CD4-positive, alpha-beta memory T cell (primary cell): ENCODE measurements at regions of chr5 and their contacts with region 1.

Region 1: GRCh38 chr5:76325876-76326491 is 77.1 kb upstream of the IQGAP2 start:
- DNase-seq: peak; percentile 52 to 65 (median 57)
- H3K4me3 ChIP-seq: no peak overlapping the region
- H3K4me3 Mint-ChIP-seq: peak overlapping the region; percentile 66 to 84 (median 74)
- H3K27ac ChIP-seq: peak overlapping the region; percentile 49
- H3K27ac Mint-ChIP-seq: peak overlapping the region; percentile 91 to 97 (median 94)
- H3K4me1 ChIP-seq: peaks cover 66% of the 10 kb centered on the region
- H3K4me1 Mint-ChIP-seq: peaks cover 52 to 79% (median 67%) of the 10 kb centered on the region in 4 donors
- H3K27me3 ChIP-seq: no peaks in the 10 kb centered on the region
- H3K27me3 Mint-ChIP-seq: no peaks in the 10 kb centered on the region

Region 2: DNA sequence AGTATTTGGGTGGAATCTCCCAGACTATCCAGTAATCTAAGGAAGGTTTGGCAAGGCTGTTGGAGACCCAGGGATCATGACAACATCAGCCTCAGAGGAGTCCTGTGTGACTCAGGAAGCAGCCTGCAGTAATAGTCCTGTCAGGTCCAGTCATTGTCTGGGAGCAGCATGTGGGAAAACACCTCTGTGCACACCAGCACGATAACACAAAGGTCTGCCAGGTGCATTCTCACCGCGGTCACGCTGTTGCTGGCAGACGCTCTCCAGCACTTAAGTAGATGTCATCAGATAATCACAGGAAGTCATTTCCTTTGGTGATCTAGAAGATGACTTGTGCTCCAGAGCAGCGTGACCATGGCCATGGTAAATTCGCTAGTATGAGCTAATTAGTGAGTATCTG is 22.1 kb before region 1 on chr5:
- CTCF ChIA-PET with region 1: interaction called, 40 read pairs
- POLR2A ChIA-PET with region 1: interaction called, 25 read pairs
- intact Hi-C with region 1: no loop called
- DNase-seq: peak; percentile 16 to 75 (median 39)
- H3K4me3 ChIP-seq: peak overlapping the region in 1 of 2 donors; percentile 1
- H3K4me3 Mint-ChIP-seq: peak overlapping the region in 5 of 8 donors; percentile 0 to 83 (median 21)
- H3K27ac ChIP-seq: no peak overlapping the region
- H3K27ac Mint-ChIP-seq: peak overlapping the region; percentile 7 to 83 (median 75)
- H3K4me1 ChIP-seq: peaks cover 28% of the 10 kb centered on the region
- H3K4me1 Mint-ChIP-seq: peaks cover 26 to 46% (median 37%) of the 10 kb centered on the region in 4 donors
- H3K27me3 ChIP-seq: no peaks in the 10 kb centered on the region
- H3K27me3 Mint-ChIP-seq: no peaks in the 10 kb centered on the region

Region 3: GRCh38 chr5:76310208-76310607 is 15.8 kb before region 1 on chr5:
- CTCF ChIA-PET with region 1: interaction called, 40 read pairs
- POLR2A ChIA-PET with region 1: interaction called, 25 read pairs
- intact Hi-C with region 1: no loop called
- DNase-seq: no peak
- H3K4me3 ChIP-seq: no peak overlapping the region
- H3K4me3 Mint-ChIP-seq: no peak overlapping the region
- H3K27ac ChIP-seq: no peak overlapping the region
- H3K27ac Mint-ChIP-seq: peak overlapping the region in 1 of 7 donors; percentile 13
- H3K4me1 ChIP-seq: no peaks in the 10 kb centered on the region
- H3K4me1 Mint-ChIP-seq: peaks cover 5 to 14% (median 8%) of the 10 kb centered on the region in 4 donors
- H3K27me3 ChIP-seq: no peaks in the 10 kb centered on the region
- H3K27me3 Mint-ChIP-seq: no peaks in the 10 kb centered on the region

Region 4: DNA sequence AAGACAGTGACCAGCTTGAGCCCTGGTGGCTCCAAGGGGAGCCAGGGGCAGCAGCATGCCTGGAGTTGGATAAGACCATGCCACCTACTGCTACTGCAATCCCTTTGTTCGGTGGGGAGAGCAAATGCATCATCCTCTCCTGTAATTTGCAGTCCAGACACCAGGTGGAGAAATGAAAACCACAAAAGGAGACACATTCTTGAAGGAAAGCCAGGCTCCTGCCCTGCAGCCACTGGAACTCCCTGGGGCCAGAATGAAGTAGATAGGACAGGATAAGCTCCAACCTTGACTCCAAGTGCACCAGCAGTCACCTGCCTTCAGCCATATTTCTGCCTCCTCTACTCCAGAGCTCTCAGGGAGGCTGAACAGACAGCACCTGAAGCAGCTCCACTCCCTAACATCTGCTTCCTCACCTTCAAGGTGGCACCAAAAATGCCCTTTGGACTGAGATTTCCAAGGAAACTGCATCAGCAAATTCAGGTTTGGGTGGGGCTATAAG is 12.0 kb after region 1 on chr5:
- CTCF ChIA-PET with region 1: interaction called, 11 read pairs
- POLR2A ChIA-PET with region 1: interaction called, 11 read pairs
- intact Hi-C with region 1: no loop called
- DNase-seq: peak; percentile 55 to 62 (median 58)
- H3K4me3 ChIP-seq: no peak overlapping the region
- H3K4me3 Mint-ChIP-seq: peak overlapping the region in 4 of 8 donors; percentile 16 to 54 (median 25)
- H3K27ac ChIP-seq: no peak overlapping the region
- H3K27ac Mint-ChIP-seq: peak overlapping the region in 5 of 7 donors; percentile 36 to 70 (median 66)
- H3K4me1 ChIP-seq: peaks cover 33% of the 10 kb centered on the region
- H3K4me1 Mint-ChIP-seq: peaks cover 28 to 42% (median 30%) of the 10 kb centered on the region in 4 donors
- H3K27me3 ChIP-seq: no peaks in the 10 kb centered on the region
- H3K27me3 Mint-ChIP-seq: no peaks in the 10 kb centered on the region

Region 5: GRCh38 chr5:76473661-76474060 is 147.7 kb after region 1 on chr5:
- CTCF ChIA-PET with region 1: interaction called, 3 read pairs
- POLR2A ChIA-PET with region 1: no interaction called
- intact Hi-C with region 1: loop called (anchors 5 kb)
- DNase-seq: peak; percentile 77 to 89 (median 81)
- H3K4me3 ChIP-seq: no peak overlapping the region
- H3K4me3 Mint-ChIP-seq: peak overlapping the region; percentile 42 to 76 (median 58)
- H3K27ac ChIP-seq: peak overlapping the region; percentile 23
- H3K27ac Mint-ChIP-seq: peak overlapping the region; percentile 90 to 99 (median 92)
- H3K4me1 ChIP-seq: peaks cover 90% of the 10 kb centered on the region
- H3K4me1 Mint-ChIP-seq: peaks cover 59 to 91% (median 77%) of the 10 kb centered on the region in 4 donors
- H3K27me3 ChIP-seq: no peaks in the 10 kb centered on the region
- H3K27me3 Mint-ChIP-seq: no peaks in the 10 kb centered on the region

Region 6: GRCh38 chr5:76556511-76557221 is 230.7 kb after region 1 on chr5:
- CTCF ChIA-PET with region 1: no interaction called
- POLR2A ChIA-PET with region 1: no interaction called
- intact Hi-C with region 1: no loop called
- DNase-seq: no peak
- H3K4me3 ChIP-seq: no peak overlapping the region
- H3K4me3 Mint-ChIP-seq: peak overlapping the region in 2 of 8 donors; percentile 23 to 28
- H3K27ac ChIP-seq: peak overlapping the region; percentile 12
- H3K27ac Mint-ChIP-seq: peak overlapping the region; percentile 59 to 90 (median 74)
- H3K4me1 ChIP-seq: peaks cover 23% of the 10 kb centered on the region
- H3K4me1 Mint-ChIP-seq: peaks cover 35 to 59% (median 53%) of the 10 kb centered on the region in 4 donors
- H3K27me3 ChIP-seq: no peaks in the 10 kb centered on the region
- H3K27me3 Mint-ChIP-seq: no peaks in the 10 kb centered on the region

Region 7: DNA sequence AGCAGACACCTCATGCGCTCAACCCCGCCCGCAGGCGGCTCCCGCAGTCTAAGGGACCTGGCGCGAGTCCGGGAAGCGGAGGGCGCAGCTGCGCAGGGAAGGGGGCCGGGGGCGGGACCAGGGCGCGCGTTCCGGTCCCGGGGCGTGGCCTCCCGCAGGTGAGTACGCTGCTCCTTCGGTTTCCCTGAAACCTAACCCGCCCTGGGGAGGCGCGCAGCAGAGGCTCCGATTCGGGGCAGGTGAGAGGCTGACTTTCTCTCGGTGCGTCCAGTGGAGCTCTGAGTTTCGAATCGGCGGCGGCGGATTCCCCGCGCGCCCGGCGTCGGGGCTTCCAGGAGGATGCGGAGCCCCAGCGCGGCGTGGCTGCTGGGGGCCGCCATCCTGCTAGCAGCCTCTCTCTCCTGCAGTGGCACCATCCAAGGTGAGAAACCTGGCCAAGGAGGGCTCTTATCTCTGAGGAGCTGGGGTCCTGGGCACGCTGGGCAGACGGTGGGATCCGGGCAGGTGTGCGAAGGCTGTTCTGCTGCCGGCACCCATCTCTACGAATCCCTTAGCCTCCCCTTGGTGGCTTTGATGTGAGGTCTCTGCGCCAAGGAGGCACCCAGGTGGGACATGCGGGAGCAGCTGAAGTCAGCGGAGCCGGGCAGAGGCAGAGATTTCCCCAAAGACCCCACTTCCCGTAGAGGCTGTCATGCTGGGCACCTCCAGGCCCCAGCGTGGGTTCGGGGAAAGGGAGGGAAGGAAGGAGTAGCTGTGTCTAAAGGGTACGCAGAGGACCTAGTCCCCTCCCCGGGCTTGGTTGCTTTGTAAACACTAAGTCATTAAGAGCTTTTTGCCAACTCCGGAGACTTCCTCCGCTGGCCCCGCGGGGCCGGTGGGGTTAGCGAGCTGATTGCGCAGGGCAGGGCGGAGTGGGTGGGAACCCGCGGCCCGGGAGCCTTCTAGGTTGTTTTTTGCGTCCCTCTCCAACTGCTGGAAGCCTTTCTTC is 493.2 kb after region 1 on chr5 and contains the start of gene F2RL1:
- CTCF ChIA-PET with region 1: no interaction called
- POLR2A ChIA-PET with region 1: no interaction called
- intact Hi-C with region 1: no loop called
- DNase-seq: peak; percentile 43 to 58 (median 48)
- H3K4me3 ChIP-seq: peak within 1 kb of the TSS; percentile 76 to 80
- H3K4me3 Mint-ChIP-seq: peak within 1 kb of the TSS; percentile 88 to 95 (median 88)
- H3K27ac ChIP-seq: peak within 1 kb of the TSS; percentile 22
- H3K27ac Mint-ChIP-seq: peak within 1 kb of the TSS in 2 of 7 donors; percentile 3 to 22
- H3K4me1 ChIP-seq: peaks cover 21% of the 10 kb centered on the region
- H3K4me1 Mint-ChIP-seq: peaks cover 13 to 24% (median 19%) of the 10 kb centered on the region in 4 donors
- H3K27me3 ChIP-seq: no peaks in the 10 kb centered on the region
- H3K27me3 Mint-ChIP-seq: peaks cover 0 to 3% of the 10 kb centered on the region in 2 donors
- total RNA-seq, gene F2RL1: 5.1 to 5.5 TPM